Activated naive CD4-positive, alpha-beta T cell treated with anti-CD3 and anti-CD28 coated beads for 36 hours (primary cell): ENCODE measurements at regions of chr12 and their contacts with region 1.

Region 1: DNA sequence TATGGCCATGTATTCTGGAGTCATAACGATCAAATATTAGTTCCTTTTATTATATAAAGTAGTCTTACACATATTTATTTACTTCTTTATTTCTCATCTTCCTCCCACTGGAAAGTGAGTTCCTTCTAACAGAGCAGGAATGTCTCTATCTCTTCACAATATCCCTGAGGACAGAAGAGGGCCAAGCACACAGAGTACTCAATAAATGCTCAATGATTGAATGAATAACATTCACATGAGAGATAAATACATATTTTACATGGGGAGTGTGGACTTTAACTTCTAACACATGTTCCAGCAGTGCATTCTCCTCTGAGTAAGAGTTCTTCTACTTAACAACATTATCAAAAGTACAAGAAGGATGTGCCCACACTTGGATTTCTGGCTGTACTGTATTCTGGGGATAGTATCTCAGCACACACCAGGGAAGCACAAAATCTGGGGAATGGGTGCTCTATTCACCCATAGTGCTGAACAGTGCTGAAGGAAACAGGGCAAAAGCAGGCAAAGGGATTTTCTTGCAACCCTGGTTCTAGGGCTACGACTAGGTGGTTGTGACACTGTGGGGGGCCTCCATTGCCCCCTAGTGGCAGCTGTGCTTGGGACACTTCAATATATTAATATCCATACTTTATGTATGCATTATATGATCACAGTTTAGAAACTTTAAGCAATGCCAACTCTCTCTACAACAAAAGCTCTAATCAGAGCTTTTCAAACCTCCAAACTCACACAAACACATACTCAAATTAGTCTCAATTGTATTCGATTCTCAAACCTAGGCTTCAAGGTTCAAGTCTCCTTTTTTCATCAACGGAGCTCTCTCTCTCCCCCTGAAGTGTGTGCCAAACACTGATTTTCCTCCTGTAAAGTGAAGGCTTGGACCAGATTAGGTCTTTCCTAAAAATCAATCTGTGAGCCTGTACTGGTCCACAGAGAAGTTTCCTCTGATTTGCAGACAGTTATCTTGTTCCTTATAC is 115.5 kb downstream of the SLC2A13 start:
- DNase-seq: peak; percentile 74
- H3K4me3 Mint-ChIP-seq: no peak overlapping the region
- H3K27ac Mint-ChIP-seq: no peak overlapping the region
- H3K4me1 Mint-ChIP-seq: no peaks in the 10 kb centered on the region
- H3K27me3 Mint-ChIP-seq: no peaks in the 10 kb centered on the region

Region 2: GRCh38 chr12:39319187-39319586 is 671.2 kb before region 1 on chr12:
- CTCF ChIA-PET with region 1: interaction called, 5 read pairs
- intact Hi-C with region 1: loop called (anchors 1 kb)
- DNase-seq: no peak
- H3K4me3 Mint-ChIP-seq: no peak overlapping the region
- H3K27ac Mint-ChIP-seq: no peak overlapping the region
- H3K4me1 Mint-ChIP-seq: no peaks in the 10 kb centered on the region
- H3K27me3 Mint-ChIP-seq: no peaks in the 10 kb centered on the region

Region 3: DNA sequence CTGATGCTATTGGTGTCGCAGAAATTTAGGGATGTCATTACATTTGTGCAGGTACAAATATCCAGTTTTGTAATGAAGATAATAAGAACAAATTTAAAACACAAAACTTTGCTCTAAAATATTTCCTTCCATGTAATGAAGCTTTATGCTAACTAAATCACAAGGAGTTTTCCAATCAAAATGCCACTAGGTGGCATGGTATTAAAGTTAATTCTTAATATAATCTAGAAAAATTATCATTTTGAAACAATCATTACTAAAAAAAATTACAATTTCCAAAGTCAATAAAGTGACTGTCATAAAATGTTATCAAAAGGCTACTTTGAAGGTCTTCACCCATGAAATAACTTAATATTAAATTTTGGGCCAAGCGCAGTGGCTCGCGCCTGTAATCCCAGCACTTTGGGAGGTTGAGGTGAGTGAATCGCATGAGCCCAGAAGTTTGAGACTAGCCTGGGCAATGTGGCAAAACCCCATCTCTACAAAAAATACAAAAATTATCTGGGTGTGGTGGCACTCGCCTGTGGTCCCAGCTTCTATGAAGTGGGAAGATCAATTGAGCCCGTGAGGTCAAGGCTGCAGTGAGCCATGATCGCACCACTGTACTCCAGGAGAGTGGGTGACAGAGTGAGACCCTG is 624.9 kb before region 1 on chr12:
- CTCF ChIA-PET with region 1: no interaction called
- intact Hi-C with region 1: loop called (anchors 10 kb)
- DNase-seq: no peak
- H3K4me3 Mint-ChIP-seq: no peak overlapping the region
- H3K27ac Mint-ChIP-seq: no peak overlapping the region
- H3K4me1 Mint-ChIP-seq: no peaks in the 10 kb centered on the region
- H3K27me3 Mint-ChIP-seq: no peaks in the 10 kb centered on the region

Region 4: GRCh38 chr12:39426636-39427245 is 563.7 kb before region 1 on chr12:
- CTCF ChIA-PET with region 1: no interaction called
- intact Hi-C with region 1: no loop called
- DNase-seq: no peak
- H3K4me3 Mint-ChIP-seq: no peak overlapping the region
- H3K27ac Mint-ChIP-seq: no peak overlapping the region
- H3K4me1 Mint-ChIP-seq: no peaks in the 10 kb centered on the region
- H3K27me3 Mint-ChIP-seq: no peaks in the 10 kb centered on the region

Region 5: GRCh38 chr12:39587225-39587624 is 403.2 kb before region 1 on chr12:
- CTCF ChIA-PET with region 1: interaction called, 3 read pairs
- intact Hi-C with region 1: loop called (anchors 1 kb)
- DNase-seq: peak; percentile 38
- H3K4me3 Mint-ChIP-seq: no peak overlapping the region
- H3K27ac Mint-ChIP-seq: no peak overlapping the region
- H3K4me1 Mint-ChIP-seq: peaks cover 12% of the 10 kb centered on the region
- H3K27me3 Mint-ChIP-seq: no peaks in the 10 kb centered on the region

Region 6: DNA sequence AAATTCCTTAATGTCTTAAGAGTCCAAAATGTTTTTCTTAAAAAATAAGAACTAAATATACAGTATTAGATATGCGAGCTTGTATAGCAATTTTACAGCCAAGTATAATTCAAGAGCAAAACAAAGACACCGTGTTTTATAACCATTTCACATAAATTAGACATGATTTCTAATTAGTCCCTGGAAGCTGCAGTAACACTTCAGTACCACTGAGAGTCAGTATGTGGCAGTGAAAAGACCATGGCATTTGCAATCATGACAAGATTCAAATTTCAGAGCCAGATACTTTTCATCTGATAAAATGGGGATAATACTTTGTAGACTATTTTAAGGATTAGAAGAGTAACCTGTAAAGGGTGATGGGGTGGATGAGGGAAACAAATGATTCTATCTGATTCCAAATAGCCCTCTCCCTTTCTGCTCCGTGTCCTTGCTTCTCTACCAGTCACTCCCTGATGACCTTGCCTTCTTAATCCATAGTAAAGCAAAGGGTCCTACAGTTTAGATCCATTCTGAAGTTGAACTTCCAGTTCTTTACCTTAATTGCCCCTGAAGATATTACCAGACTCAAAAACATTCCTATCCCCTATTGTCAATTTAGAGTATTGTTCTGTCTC is 225.4 kb before region 1 on chr12:
- CTCF ChIA-PET with region 1: interaction called, 23 read pairs
- intact Hi-C with region 1: loop called (anchors 1 kb)
- DNase-seq: no peak
- H3K4me3 Mint-ChIP-seq: no peak overlapping the region
- H3K27ac Mint-ChIP-seq: no peak overlapping the region
- H3K4me1 Mint-ChIP-seq: no peaks in the 10 kb centered on the region
- H3K27me3 Mint-ChIP-seq: no peaks in the 10 kb centered on the region

Region 7: GRCh38 chr12:39883411-39883810 is 107.0 kb before region 1 on chr12:
- CTCF ChIA-PET with region 1: no interaction called
- intact Hi-C with region 1: no loop called
- DNase-seq: no peak
- H3K4me3 Mint-ChIP-seq: no peak overlapping the region
- H3K27ac Mint-ChIP-seq: no peak overlapping the region
- H3K4me1 Mint-ChIP-seq: no peaks in the 10 kb centered on the region
- H3K27me3 Mint-ChIP-seq: no peaks in the 10 kb centered on the region